H1 (cell line): ENCODE measurements at regions of chr1 and their contacts with region 1.

Region 1: DNA sequence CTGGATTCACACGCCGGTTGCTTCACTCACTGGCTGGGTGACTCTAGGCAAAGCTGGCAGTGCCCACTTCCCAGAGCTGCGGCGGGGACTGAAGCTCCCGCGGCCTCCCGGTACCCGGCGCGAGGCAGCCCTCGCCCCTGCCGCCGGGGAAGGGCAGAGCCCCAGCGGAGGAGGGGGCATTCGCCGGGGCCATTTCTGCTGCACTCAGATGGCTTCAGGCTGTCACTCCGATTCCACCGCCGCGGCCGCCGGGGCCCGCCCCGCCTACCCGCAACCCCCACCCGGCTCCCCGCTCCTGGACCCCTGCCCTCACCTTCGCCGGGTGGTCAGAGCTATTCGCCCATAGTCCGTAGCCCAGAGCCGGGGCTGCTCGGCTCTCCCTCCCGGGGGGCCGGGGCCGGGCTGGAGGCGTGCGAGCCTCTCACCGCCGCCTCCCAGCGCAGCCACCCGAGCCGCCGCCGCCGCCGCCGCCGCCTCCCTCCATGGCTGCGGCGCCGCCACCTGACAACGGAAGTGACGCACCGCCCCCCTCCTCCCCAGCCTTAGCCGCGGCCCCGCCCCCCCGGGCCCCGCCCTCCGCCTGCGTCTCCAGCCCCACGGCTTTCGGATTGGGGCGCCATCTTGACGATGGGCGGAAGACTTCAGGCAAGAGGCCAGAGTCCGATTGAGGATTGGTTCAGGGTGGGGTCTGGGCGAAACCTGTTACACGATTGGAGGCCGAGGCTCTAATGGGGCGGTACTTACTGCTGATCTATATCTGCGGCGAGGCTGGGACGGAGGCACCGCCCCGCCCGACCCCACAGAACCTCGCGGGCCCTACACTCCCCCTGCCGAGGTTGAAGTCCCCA is at the start of gene STK40:
- DNase-seq: peak; percentile 91 to 98
- H3K4me3 ChIP-seq: peak within 1 kb of the TSS; percentile 71 to 94 (median 92)
- H3K27ac ChIP-seq: peak within 1 kb of the TSS; percentile 94
- H3K4me1 ChIP-seq: peaks cover 6 to 17% (median 10%) of the 10 kb centered on the region in 4 experiments; a peak in 6 of 7 replicates
- H3K27me3 ChIP-seq: no peaks in the 10 kb centered on the region
- CTCF ChIP-seq: no peak
- EP300 ChIP-seq: no peak
- POLR2A ChIP-seq: no peak
- RAD21 ChIP-seq: no peak
- total RNA-seq, gene STK40: 25.3 and 28.6 TPM in 2 replicates

Region 2: GRCh38 chr1:36323597-36324352 is 61.9 kb before region 1 on chr1 and contains the start of gene EVA1B:
- CTCF ChIA-PET with region 1: interaction called, 6 read pairs
- POLR2A ChIA-PET with region 1: interaction called, 40 read pairs
- DNase-seq: peak in 1 of 2 experiments; percentile 79
- H3K4me3 ChIP-seq: peak within 1 kb of the TSS; percentile 27 to 67 (median 49)
- H3K27ac ChIP-seq: no peak within 1 kb of the TSS
- H3K4me1 ChIP-seq: peaks cover 0 to 28% (median 16%) of the 10 kb centered on the region in 4 experiments; a peak in 6 of 7 replicates
- H3K27me3 ChIP-seq: peaks cover 0 to 39% (median 20%) of the 10 kb centered on the region in 4 experiments; a peak in 5 of 7 replicates
- CTCF ChIP-seq: no peak
- EP300 ChIP-seq: no peak
- POLR2A ChIP-seq: no peak; a peak in 1 of 3 replicates
- RAD21 ChIP-seq: no peak
- total RNA-seq, gene EVA1B: 10.0 and 10.3 TPM in 2 replicates

Region 3: GRCh38 chr1:36350659-36351226 is 34.9 kb before region 1 on chr1:
- CTCF ChIA-PET with region 1: interaction called, 3 read pairs
- POLR2A ChIA-PET with region 1: interaction called, 19 read pairs
- DNase-seq: no peak
- H3K4me3 ChIP-seq: no peak overlapping the region
- H3K27ac ChIP-seq: no peak overlapping the region
- H3K4me1 ChIP-seq: peaks cover 0 to 6% (median 0%) of the 10 kb centered on the region in 4 experiments; a peak in 1 of 7 replicates
- H3K27me3 ChIP-seq: no peaks in the 10 kb centered on the region
- CTCF ChIP-seq: no peak
- EP300 ChIP-seq: no peak
- POLR2A ChIP-seq: no peak
- RAD21 ChIP-seq: no peak

Region 4: DNA sequence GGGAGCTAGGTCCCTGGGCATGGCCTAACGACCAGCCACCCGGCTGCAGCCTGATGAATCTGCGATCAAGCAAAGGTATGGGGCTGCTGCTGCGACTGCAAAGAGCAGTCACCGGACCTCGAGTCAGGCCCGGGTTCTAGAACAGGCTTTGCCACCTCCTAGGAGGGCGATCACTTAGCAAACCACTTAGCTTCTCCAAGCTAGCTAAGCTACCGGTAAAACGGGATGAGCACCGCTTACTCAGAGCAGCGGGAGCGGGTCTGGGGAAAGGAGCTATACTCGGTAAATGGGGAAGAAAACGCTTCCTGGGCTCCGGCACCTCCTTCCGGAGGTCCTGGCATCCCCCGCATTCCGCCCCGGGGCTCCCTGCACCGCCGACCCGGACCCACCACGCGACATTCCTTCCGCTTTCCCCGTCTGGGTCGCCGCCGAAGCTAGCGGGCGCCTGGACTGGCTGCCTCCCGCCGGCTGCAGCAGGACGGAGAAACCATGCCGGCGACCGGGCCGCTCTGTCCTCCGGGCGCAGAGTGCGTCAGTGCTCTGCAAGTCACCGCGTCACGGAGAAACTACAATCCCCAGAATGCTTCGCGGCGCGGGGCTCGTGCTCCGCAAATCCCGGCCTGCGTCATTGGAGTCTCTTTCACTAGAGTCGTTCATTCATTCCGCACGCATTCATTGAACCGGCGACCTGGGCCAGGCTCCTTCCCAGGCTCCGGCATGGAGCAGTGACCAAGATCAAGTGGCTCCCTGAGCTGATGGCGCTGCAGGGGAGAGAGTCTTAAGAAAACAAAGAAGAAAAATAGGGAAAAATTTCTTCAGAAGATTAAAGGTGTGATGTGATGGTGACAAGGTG is 12.0 kb after region 1 on chr1 and contains the start of gene LSM10:
- CTCF ChIA-PET with region 1: interaction called, 28 read pairs
- POLR2A ChIA-PET with region 1: no interaction called
- DNase-seq: peak; percentile 73 to 94
- H3K4me3 ChIP-seq: peak within 1 kb of the TSS; percentile 73 to 87 (median 78)
- H3K27ac ChIP-seq: 0 out of 2 replicates have a peak within 1 kb of the TSS, but pooled peaks have one; percentile 25
- H3K4me1 ChIP-seq: peaks cover 0 to 12% (median 11%) of the 10 kb centered on the region in 4 experiments; a peak in 5 of 7 replicates
- H3K27me3 ChIP-seq: no peaks in the 10 kb centered on the region
- CTCF ChIP-seq: peak in 1 of 3 experiments; percentile 0; a peak in 1 of 4 replicates
- EP300 ChIP-seq: no peak
- POLR2A ChIP-seq: peak; percentile 27 to 82
- RAD21 ChIP-seq: no peak
- total RNA-seq, gene LSM10: 59.1 and 59.5 TPM in 2 replicates

Region 5: GRCh38 chr1:36420836-36421664 is 35.4 kb after region 1 on chr1:
- CTCF ChIA-PET with region 1: interaction called, 5 read pairs
- POLR2A ChIA-PET with region 1: interaction called, 18 read pairs
- DNase-seq: peak; percentile 79 to 100
- H3K4me3 ChIP-seq: no peak overlapping the region
- H3K27ac ChIP-seq: no peak overlapping the region
- H3K4me1 ChIP-seq: no peaks in the 10 kb centered on the region
- H3K27me3 ChIP-seq: no peaks in the 10 kb centered on the region
- CTCF ChIP-seq: peak; percentile 91 to 99 (median 99)
- EP300 ChIP-seq: no peak
- POLR2A ChIP-seq: no peak
- RAD21 ChIP-seq: peak; percentile 94 to 96